ENCODE measurements at regions of chr16 and their contacts with region 1.

Region 1: GRCh38 chr16:3059000-3059722 is 6.3 kb upstream of the IL32 start:
- DNase-seq: peak; percentile 70 to 95 (median 86)
- ATAC-seq: peak; percentile 88
- H3K4me3 ChIP-seq: peak overlapping the region; percentile 87
- H3K4me3 Mint-ChIP-seq: peak overlapping the region; percentile 95
- H3K27ac ChIP-seq: peak overlapping the region; percentile 72 to 74
- H3K27ac Mint-ChIP-seq: peak overlapping the region; percentile 83
- H3K4me1 ChIP-seq: peaks cover 84% of the 10 kb centered on the region
- H3K4me1 Mint-ChIP-seq: peaks cover 60% of the 10 kb centered on the region
- H3K27me3 ChIP-seq: no peaks in the 10 kb centered on the region
- H3K27me3 Mint-ChIP-seq: no peaks in the 10 kb centered on the region
- CTCF ChIP-seq: peak; percentile 88

Region 2: DNA sequence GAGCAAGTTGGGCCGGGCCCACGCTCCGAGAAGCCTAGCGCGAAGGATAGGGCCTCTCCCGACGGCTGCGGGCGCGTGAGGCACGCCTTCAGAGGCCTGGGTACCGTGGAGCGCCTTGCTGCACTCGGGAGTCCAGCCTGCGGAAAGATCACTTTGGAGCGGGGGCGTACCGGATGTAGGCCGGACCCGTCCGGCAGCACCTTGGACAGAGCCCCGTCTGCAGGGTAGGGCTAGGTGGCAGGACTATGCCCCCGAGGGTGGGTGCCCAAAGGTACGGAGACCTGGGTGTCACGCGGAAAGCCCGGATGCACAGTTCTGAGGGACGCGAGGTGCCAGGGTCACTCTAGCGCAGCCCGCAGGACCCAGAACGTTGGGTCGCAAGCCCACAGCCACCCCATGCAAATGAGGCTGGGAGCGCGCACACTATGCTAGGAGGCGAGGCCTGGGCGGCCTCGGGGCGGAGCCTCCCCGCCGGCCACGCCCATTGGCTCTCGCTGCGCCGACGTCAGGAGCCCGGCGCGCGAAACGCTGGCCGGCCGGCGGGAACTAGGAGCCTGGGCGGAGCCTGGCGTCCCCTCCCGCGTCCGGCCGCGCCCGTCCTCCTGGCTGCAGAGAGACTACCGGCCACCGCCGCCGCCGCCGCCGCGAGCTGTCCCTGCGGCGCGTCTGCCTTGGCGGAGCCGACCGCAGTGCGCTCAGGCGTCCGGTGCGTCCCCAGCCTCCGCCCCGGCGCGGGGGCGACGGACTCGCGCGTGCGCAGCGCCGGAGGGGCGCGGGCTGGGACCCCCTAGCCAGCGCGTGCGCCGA is 90.2 kb before region 1 on chr16 and contains the start of gene PAQR4:
- CTCF ChIA-PET with region 1: no interaction called
- POLR2A ChIA-PET with region 1: no interaction called
- intact Hi-C with region 1: no loop called
- DNase-seq: peak; percentile 44 to 91 (median 66)
- ATAC-seq: peak; percentile 69
- H3K4me3 ChIP-seq: peak within 1 kb of the TSS; percentile 56
- H3K4me3 Mint-ChIP-seq: peak within 1 kb of the TSS; percentile 81
- H3K27ac ChIP-seq: no peak within 1 kb of the TSS
- H3K27ac Mint-ChIP-seq: no peak within 1 kb of the TSS
- H3K4me1 ChIP-seq: peaks cover 63% of the 10 kb centered on the region
- H3K4me1 Mint-ChIP-seq: peaks cover 27% of the 10 kb centered on the region
- H3K27me3 ChIP-seq: peaks cover 35 to 46% of the 10 kb centered on the region in 2 experiments
- H3K27me3 Mint-ChIP-seq: peaks cover 37% of the 10 kb centered on the region
- CTCF ChIP-seq: no peak
- total RNA-seq, gene PAQR4: 0.39 to 0.44 TPM

Region 3: DNA sequence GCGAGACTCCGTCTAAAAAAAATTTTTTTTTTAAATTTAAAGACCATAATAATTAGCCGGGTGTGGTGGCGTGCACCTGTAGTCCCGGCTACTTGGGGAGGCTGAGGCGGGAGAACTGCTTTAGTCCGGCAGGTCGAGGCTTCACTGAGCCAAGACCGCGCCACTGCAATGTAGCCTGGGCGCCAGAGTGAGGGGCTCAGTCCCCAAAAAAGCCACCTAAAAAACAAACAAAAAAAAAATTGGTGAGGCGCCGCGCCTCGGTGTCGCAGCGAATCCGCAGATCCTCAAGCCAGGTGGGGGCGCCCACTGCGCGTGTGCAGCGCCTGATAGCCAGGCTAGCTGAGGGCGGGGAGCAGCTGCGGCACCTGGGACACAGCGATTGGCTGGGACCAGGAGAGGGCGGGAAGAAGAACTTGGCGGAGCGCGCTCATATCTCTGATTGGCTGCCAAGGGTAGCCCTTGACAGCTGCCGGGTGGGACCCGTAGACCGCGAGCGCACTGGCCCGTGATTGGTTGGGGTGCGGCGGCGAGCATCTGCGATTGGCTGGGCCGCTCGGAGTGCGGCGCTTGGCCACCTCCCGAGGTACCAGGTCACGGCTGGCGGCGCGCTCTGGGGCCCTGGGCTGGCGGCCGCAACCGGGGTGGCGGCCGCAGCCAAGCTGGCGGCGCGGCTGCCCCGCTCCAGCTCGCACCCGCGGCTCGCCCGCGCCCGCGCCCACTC is 55.4 kb before region 1 on chr16:
- CTCF ChIA-PET with region 1: interaction called, 5 read pairs
- POLR2A ChIA-PET with region 1: interaction called, 4 read pairs
- intact Hi-C with region 1: loop called in 1 of 2 experiments (anchors 5 kb)
- DNase-seq: peak; percentile 90 to 99 (median 95)
- ATAC-seq: peak; percentile 99
- H3K4me3 ChIP-seq: no peak overlapping the region
- H3K4me3 Mint-ChIP-seq: peak overlapping the region; percentile 67
- H3K27ac ChIP-seq: no peak overlapping the region
- H3K27ac Mint-ChIP-seq: peak overlapping the region; percentile 13
- H3K4me1 ChIP-seq: peaks cover 32% of the 10 kb centered on the region
- H3K4me1 Mint-ChIP-seq: peaks cover 31% of the 10 kb centered on the region
- H3K27me3 ChIP-seq: peaks cover 0 to 3% of the 10 kb centered on the region in 2 experiments
- H3K27me3 Mint-ChIP-seq: peaks cover 27% of the 10 kb centered on the region
- CTCF ChIP-seq: peak; percentile 64

Region 4: DNA sequence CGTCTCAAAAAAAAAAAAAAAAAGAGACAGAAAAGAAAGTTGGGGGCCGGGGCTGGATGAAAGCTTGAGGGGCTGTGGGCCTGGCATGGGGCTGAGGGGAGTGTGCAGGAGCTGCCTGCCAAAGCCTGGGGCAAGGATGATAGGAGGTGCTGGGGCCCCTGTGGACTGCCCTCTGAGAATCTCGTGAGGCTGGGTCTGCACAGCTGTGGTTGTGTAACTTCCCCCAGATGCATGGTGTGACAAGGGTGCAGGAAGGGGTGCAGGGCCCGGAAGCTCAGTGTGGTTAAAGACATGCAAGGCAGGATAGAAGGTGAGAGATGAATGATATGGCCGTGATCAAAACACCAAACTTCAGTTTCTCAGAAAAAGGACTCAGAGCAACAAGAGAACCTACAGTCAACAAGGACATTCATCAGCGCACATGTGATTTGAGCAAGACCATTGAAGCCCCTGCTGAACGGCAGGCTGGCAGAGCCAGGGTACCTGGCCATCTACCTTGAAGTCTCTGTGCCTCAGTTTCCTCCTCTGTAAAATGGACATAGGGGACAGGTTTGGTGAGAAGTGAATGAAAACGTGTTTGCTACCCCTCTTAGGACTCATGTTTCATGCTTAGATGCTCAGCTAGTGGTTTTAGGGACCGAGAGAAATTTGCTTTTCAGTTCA is 15.8 kb after region 1 on chr16:
- CTCF ChIA-PET with region 1: interaction called, 10 read pairs
- POLR2A ChIA-PET with region 1: interaction called, 137 read pairs
- intact Hi-C with region 1: no loop called
- DNase-seq: peak; percentile 58 to 95 (median 82)
- ATAC-seq: peak; percentile 89
- H3K4me3 ChIP-seq: peak overlapping the region; percentile 34
- H3K4me3 Mint-ChIP-seq: peak overlapping the region; percentile 77
- H3K27ac ChIP-seq: peak overlapping the region; percentile 80 to 86
- H3K27ac Mint-ChIP-seq: peak overlapping the region; percentile 95
- H3K4me1 ChIP-seq: peaks cover 96% of the 10 kb centered on the region
- H3K4me1 Mint-ChIP-seq: peaks cover 93% of the 10 kb centered on the region
- H3K27me3 ChIP-seq: no peaks in the 10 kb centered on the region
- H3K27me3 Mint-ChIP-seq: no peaks in the 10 kb centered on the region
- CTCF ChIP-seq: no peak

Region 5: DNA sequence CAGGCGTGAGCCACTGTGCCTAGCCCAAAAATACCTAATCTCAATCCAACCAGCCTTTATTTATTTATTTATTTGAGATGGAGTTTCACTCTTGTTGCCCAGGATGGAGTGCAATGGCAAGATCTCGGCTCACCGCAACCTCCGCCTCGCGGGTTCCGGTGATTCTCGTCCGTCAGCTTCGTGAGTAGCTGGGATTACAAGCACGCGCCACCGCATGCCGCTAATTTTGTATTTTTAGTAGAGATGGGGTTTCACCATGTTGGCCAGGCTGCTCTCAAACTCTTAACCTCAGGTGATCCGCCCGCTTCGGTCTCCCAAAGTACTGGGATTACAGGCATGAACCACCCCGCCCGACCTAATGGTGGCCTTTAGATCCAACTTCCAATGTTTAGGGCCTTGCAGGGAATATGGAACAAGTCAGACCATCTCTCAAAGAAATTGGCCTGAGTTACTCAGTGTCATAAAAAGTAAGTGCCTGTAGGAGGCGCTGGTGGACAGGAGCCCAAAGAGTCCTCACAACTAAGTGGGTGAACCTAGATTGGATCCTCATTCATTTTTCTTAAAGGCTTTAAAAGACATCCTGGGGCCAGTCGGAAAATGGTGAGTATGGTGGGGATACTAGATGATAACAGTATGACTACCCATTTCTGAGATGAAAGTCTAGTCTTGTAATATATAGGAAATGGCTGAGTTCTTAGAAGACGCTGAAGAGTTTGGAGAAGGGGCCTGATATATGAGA is 35.3 kb after region 1 on chr16:
- CTCF ChIA-PET with region 1: interaction called, 15 read pairs
- POLR2A ChIA-PET with region 1: interaction called, 6 read pairs
- intact Hi-C with region 1: loop called in 1 of 2 experiments (anchors 1 kb)
- DNase-seq: peak in 10 of 14 experiments; percentile 24 to 83 (median 48)
- ATAC-seq: peak; percentile 55
- H3K4me3 ChIP-seq: no peak overlapping the region
- H3K4me3 Mint-ChIP-seq: peak overlapping the region; percentile 3
- H3K27ac ChIP-seq: no peak overlapping the region
- H3K27ac Mint-ChIP-seq: peak overlapping the region; percentile 51
- H3K4me1 ChIP-seq: peaks cover 68% of the 10 kb centered on the region
- H3K4me1 Mint-ChIP-seq: peaks cover 50% of the 10 kb centered on the region
- H3K27me3 ChIP-seq: no peaks in the 10 kb centered on the region
- H3K27me3 Mint-ChIP-seq: no peaks in the 10 kb centered on the region
- CTCF ChIP-seq: peak; percentile 61

Region 6: DNA sequence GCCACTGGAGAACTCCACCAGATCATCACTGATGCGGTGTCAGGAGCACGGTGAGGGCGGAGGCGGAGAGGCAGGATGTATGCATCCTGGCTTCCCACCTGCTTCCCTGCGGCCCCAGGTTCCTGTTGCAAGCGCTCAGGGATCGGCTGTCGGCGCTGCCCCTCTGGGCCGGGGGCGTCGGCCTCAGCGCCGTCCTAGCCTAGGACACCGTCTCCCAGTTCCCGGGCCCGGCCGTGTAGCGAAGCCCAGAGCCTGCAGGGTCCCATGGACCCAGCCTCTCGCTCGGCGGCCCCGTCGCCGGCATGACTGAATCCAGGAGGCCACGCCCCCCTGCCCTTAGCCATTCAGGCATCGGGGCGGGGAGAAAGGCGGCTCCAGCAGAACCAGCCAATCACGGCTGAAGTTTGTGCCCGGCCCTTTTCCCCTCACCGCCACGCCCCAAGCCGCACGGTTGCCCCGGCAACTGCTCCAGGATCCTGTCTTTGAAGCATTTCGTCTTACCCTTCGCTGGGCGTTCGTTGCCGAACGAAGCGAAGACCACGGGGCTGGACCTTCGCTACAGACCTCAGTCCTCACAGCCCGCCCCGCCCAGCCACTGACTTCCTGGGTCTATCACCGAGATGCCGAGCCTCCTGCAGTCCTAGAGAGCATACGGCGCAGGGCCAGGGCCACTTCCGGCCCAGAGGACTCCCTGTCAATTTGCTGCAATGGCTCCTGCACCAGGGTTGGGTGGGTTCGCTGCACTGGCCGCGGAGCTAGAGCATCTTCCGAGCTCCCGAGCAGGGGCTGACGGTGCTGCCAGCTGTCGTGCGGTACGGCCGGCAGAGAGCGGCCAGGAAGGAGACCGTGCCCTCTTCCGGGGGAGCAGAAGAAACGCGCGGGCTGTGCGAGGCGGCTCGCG is 65.1 kb after region 1 on chr16:
- CTCF ChIA-PET with region 1: interaction called, 62 read pairs
- POLR2A ChIA-PET with region 1: interaction called, 70 read pairs
- intact Hi-C with region 1: loop called (anchors 1 kb)
- DNase-seq: peak; percentile 93 to 98 (median 96)
- ATAC-seq: peak; percentile 89
- H3K4me3 ChIP-seq: peak overlapping the region; percentile 77
- H3K4me3 Mint-ChIP-seq: peak overlapping the region; percentile 98
- H3K27ac ChIP-seq: peak overlapping the region; percentile 70 to 71
- H3K27ac Mint-ChIP-seq: peak overlapping the region; percentile 92
- H3K4me1 ChIP-seq: peaks cover 37% of the 10 kb centered on the region
- H3K4me1 Mint-ChIP-seq: peaks cover 49% of the 10 kb centered on the region
- H3K27me3 ChIP-seq: no peaks in the 10 kb centered on the region
- H3K27me3 Mint-ChIP-seq: no peaks in the 10 kb centered on the region
- CTCF ChIP-seq: peak; percentile 41

Region 7: DNA sequence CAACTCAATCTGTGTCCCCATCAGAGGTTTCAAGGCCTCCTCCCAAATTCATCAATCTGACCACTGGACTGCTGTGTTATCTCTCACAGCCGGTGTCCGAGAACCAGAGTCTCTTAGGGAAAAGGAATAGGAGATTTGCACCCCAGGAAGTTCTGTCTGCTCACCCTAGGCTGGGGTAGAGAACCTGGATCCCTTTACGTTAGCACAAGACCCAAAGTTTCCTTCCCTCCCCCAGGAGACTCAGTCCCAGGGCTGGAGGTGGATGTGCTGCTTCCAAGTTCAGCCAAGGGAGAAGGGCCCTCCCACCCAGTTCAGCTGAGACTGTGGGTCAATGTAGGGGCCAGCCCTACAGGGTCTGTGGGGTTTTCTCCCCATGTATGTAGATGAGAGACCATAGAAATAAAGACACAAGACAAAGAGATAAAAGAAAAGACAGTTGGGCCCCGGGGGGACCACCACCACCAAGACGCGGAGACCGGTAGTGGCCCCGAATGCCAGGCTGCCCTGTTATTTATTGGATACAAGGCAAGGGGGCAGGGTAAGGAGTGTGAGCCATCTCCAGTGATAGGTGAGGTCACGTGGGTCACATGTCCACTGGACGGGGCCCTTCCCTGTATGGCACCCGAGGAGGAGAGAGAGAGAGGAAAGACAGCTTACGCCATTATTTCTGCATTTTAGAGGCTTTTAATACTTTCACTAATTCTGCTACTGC is 106.1 kb after region 1 on chr16:
- CTCF ChIA-PET with region 1: interaction called, 3 read pairs
- POLR2A ChIA-PET with region 1: interaction called, 3 read pairs
- intact Hi-C with region 1: loop called (anchors 2 kb)
- DNase-seq: no peak
- ATAC-seq: no peak
- H3K4me3 ChIP-seq: peak overlapping the region; percentile 21
- H3K4me3 Mint-ChIP-seq: peak overlapping the region; percentile 74
- H3K27ac ChIP-seq: no peak overlapping the region
- H3K27ac Mint-ChIP-seq: peak overlapping the region; percentile 56
- H3K4me1 ChIP-seq: peaks cover 11% of the 10 kb centered on the region
- H3K4me1 Mint-ChIP-seq: peaks cover 11% of the 10 kb centered on the region
- H3K27me3 ChIP-seq: peaks cover 5 to 7% of the 10 kb centered on the region in 2 experiments
- H3K27me3 Mint-ChIP-seq: no peaks in the 10 kb centered on the region
- CTCF ChIP-seq: no peak

Measured in CD4-positive, alpha-beta T cell (primary cell).